Activated T-helper 1 cell treated with anti-CD3 and anti-CD28 coated beads, Interleukin-12 subunit alpha, Interleukin-12 subunit beta, Interleukin-2, Interleukin-4 antibody, amounts not matched to agents 30 ng/mL and 10 ng/mL and 1 ng/mL, durations not matched to agents 14 hours and 24 hours and 36 hours (primary cell): ENCODE measurements at regions of chr21 and their contacts with region 1.

Region 1: GRCh38 chr21:37267269-37268184 is at the start of gene VPS26C:
- DNase-seq: peak; percentile 99
- H3K4me3 Mint-ChIP-seq: peak within 1 kb of the TSS; percentile 97
- H3K27ac Mint-ChIP-seq: peak within 1 kb of the TSS; percentile 98
- H3K4me1 Mint-ChIP-seq: peaks cover 51% of the 10 kb centered on the region
- H3K27me3 Mint-ChIP-seq: peaks cover 8% of the 10 kb centered on the region
- total RNA-seq, gene VPS26C: 53.8 and 58.9 TPM in 2 replicates

Region 2: GRCh38 chr21:36989699-36990507 is 277.6 kb before region 1 on chr21:
- intact Hi-C with region 1: loop called (anchors 5 kb)
- DNase-seq: peak; percentile 87
- H3K4me3 Mint-ChIP-seq: peak overlapping the region; percentile 87
- H3K27ac Mint-ChIP-seq: peak overlapping the region; percentile 96
- H3K4me1 Mint-ChIP-seq: peaks cover 37% of the 10 kb centered on the region
- H3K27me3 Mint-ChIP-seq: no peaks in the 10 kb centered on the region

Region 3: DNA sequence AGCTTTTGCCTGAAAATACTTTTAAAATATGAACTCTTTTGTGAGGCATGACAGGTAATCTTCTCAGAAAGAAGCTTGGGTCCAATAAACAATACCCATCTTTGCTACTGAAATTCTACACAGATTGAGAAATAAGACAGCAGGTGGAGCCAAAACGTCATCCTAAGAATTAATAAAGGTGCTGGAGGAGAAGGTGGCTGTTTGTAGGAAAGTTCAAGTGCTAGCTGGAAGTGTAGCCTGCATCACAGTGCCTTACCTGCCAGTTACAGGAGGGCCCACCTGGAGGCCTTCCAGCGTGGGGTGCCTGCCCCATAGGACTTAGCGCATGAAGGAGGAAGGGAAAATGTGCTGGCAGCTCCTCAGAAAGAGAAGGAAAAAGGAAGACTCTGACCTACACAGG is 100.8 kb before region 1 on chr21:
- intact Hi-C with region 1: loop called (anchors 5 kb)
- DNase-seq: no peak
- H3K4me3 Mint-ChIP-seq: no peak overlapping the region
- H3K27ac Mint-ChIP-seq: peak overlapping the region; percentile 50
- H3K4me1 Mint-ChIP-seq: peaks cover 10% of the 10 kb centered on the region
- H3K27me3 Mint-ChIP-seq: no peaks in the 10 kb centered on the region

Region 4: DNA sequence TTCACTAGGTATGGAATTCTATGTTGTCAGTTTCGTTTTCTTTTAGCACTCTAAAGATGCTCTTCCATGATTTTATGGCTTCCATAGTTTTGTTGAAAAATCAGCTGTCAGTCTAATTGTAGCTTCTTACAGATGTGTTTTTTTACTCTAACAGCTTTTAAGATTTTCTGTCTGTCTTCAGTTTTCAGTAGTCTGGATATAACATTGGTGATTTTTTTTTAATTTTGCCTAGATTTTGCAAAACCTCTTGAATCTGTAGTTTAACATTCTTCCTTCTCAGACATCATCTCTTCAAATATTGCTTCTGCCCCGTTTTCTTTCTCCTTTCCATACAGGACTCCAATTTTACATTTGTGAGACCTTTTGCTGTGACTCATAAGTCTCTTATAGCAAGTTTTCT is 81.1 kb after region 1 on chr21:
- intact Hi-C with region 1: no loop called
- DNase-seq: no peak
- H3K4me3 Mint-ChIP-seq: no peak overlapping the region
- H3K27ac Mint-ChIP-seq: no peak overlapping the region
- H3K4me1 Mint-ChIP-seq: no peaks in the 10 kb centered on the region
- H3K27me3 Mint-ChIP-seq: peaks cover 3% of the 10 kb centered on the region

Region 5: GRCh38 chr21:37435120-37435519 is 167.6 kb after region 1 on chr21:
- intact Hi-C with region 1: loop called (anchors 1 kb)
- DNase-seq: peak; percentile 50
- H3K4me3 Mint-ChIP-seq: no peak overlapping the region
- H3K27ac Mint-ChIP-seq: no peak overlapping the region
- H3K4me1 Mint-ChIP-seq: peaks cover 45% of the 10 kb centered on the region
- H3K27me3 Mint-ChIP-seq: no peaks in the 10 kb centered on the region

Region 6: GRCh38 chr21:37503848-37504467 is 236.4 kb after region 1 on chr21:
- intact Hi-C with region 1: loop called (anchors 5 kb)
- DNase-seq: no peak
- H3K4me3 Mint-ChIP-seq: no peak overlapping the region
- H3K27ac Mint-ChIP-seq: peak overlapping the region; percentile 85
- H3K4me1 Mint-ChIP-seq: peaks cover 21% of the 10 kb centered on the region
- H3K27me3 Mint-ChIP-seq: no peaks in the 10 kb centered on the region